CD4-positive, alpha-beta T cell (primary cell): ENCODE measurements at regions of chr11 and their contacts with region 1.

Region 1: DNA sequence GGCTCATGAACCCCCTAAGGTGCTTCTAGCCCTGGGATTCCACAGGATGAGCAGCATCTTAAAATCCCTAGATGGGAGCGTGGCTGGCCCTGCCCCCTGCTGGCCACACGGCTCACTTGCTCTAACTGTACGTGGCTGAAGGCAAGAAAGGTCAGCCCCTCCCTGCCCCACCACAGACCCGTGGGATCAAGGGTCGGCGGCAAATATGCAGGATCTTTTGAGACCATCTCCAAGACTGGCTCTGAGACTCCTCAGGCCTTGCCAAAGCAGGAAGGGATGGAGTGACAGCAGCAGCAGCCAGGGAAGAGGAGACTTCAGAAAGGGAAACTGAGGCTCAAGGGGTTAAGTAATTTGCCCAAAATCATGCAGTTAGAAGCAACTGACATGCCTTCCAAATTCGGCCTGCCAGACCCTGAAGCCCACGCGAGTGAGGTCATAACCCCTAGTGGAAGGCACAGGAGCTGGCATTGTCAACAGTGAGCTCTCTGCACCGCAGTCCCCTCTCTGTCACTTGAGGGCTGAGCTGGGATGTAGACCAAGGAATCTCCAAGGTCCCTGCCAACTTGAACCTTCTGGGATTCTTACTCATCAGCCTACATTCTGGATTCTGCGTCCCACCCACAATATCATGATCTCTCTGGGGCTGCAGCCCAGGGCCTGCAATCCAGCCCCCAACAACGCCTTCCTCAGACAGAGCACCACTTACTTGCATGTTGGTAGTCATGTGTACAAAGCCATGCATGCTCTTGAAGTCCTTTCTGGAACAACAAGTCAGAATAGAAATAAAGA is 31.4 kb downstream of the CREB3L1 start:
- DNase-seq: peak; percentile 40 to 79 (median 56)
- ATAC-seq: peak; percentile 87
- H3K4me3 ChIP-seq: no peak overlapping the region
- H3K4me3 Mint-ChIP-seq: no peak overlapping the region
- H3K27ac ChIP-seq: no peak overlapping the region
- H3K27ac Mint-ChIP-seq: no peak overlapping the region
- H3K4me1 ChIP-seq: peaks cover 9% of the 10 kb centered on the region
- H3K4me1 Mint-ChIP-seq: peaks cover 5% of the 10 kb centered on the region
- H3K27me3 ChIP-seq: no peaks in the 10 kb centered on the region
- H3K27me3 Mint-ChIP-seq: no peaks in the 10 kb centered on the region
- CTCF ChIP-seq: peak; percentile 84

Region 2: GRCh38 chr11:46247664-46248063 is 61.2 kb before region 1 on chr11:
- CTCF ChIA-PET with region 1: interaction called, 12 read pairs
- POLR2A ChIA-PET with region 1: interaction called, 3 read pairs
- intact Hi-C with region 1: loop called in 1 of 2 experiments (anchors 2 kb)
- DNase-seq: peak in 11 of 14 experiments; percentile 12 to 69 (median 34)
- ATAC-seq: peak; percentile 48
- H3K4me3 ChIP-seq: no peak overlapping the region
- H3K4me3 Mint-ChIP-seq: no peak overlapping the region
- H3K27ac ChIP-seq: no peak overlapping the region
- H3K27ac Mint-ChIP-seq: no peak overlapping the region
- H3K4me1 ChIP-seq: peaks cover 12% of the 10 kb centered on the region
- H3K4me1 Mint-ChIP-seq: no peaks in the 10 kb centered on the region
- H3K27me3 ChIP-seq: no peaks in the 10 kb centered on the region
- H3K27me3 Mint-ChIP-seq: no peaks in the 10 kb centered on the region
- CTCF ChIP-seq: peak; percentile 31